ENCODE measurements at regions of chr7 and their contacts with region 1.

Region 1: GRCh38 chr7:5284304-5285281 is 1.9 kb downstream of the SLC29A4 start:
- DNase-seq: peak; percentile 49 to 82
- H3K4me3 ChIP-seq: no peak overlapping the region
- H3K27ac ChIP-seq: no peak overlapping the region
- H3K4me1 ChIP-seq: peaks cover 0 to 3% (median 3%) of the 10 kb centered on the region in 4 experiments; a peak in 5 of 7 replicates
- H3K27me3 ChIP-seq: peaks cover 0 to 16% (median 11%) of the 10 kb centered on the region in 4 experiments; a peak in 6 of 7 replicates
- CTCF ChIP-seq: peak; percentile 66 to 79 (median 78)
- EP300 ChIP-seq: no peak
- POLR2A ChIP-seq: no peak
- RAD21 ChIP-seq: peak; percentile 80 to 86

Region 2: GRCh38 chr7:5296611-5297226 is 12.1 kb after region 1 on chr7:
- CTCF ChIA-PET with region 1: interaction called, 12 read pairs
- POLR2A ChIA-PET with region 1: interaction called, 10 read pairs
- DNase-seq: peak; percentile 72 to 95
- H3K4me3 ChIP-seq: peak overlapping the region in 2 of 4 experiments; percentile 41 to 77; a peak in 4 of 8 replicates
- H3K27ac ChIP-seq: no peak overlapping the region
- H3K4me1 ChIP-seq: peaks cover 0 to 13% (median 3%) of the 10 kb centered on the region in 4 experiments; a peak in 3 of 7 replicates
- H3K27me3 ChIP-seq: peaks cover 0 to 12% (median 5%) of the 10 kb centered on the region in 4 experiments; a peak in 2 of 7 replicates
- CTCF ChIP-seq: no peak
- EP300 ChIP-seq: no peak
- POLR2A ChIP-seq: no peak
- RAD21 ChIP-seq: no peak

Measured in H1 (cell line).